Activated CD4-positive, alpha-beta memory T cell treated with anti-CD3 and anti-CD28 coated beads for 36 hours (primary cell): ENCODE measurements at regions of chr2 and their contacts with region 1.

Region 1: DNA sequence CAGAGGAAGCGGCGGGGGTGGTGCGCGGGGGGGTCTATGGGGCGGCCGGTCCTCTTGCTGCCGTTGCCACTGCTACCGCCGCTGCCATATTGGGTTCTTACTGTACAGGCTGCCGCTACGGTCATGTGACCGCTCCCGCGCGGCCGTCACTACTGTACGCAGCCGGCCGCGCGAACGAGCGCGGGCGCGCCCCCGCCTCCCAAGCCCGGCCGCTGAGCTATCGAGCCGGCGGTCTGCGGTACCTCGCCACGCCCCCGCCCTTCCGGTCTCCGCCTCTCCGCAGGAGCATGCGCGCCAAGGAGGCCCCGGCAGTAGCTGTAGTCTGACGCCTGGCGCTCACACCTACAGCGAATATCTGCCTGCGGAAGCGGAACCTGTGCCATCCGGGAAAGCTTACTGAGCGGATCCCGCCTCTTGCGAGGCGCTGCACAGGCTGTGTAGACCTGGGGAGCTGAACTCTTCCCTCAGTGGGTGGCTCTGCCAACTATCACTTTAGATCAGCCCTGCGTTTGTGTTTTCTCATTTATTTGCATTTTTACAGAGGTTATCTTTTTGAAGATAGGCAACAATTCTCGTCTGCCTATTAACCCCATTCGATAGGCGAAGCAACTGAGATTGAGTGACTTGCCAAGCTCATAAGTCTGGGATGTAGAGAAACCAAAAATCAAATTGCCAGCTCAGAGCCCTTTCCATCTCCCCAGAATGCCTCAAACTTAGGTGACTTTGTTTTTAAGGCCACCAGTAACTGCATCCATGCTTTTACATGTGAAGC is at the start of gene ASXL2:
- DNase-seq: peak; percentile 99
- H3K4me3 Mint-ChIP-seq: peak within 1 kb of the TSS; percentile 93
- H3K27ac Mint-ChIP-seq: peak within 1 kb of the TSS; percentile 94
- H3K4me1 Mint-ChIP-seq: peaks cover 39% of the 10 kb centered on the region
- H3K27me3 Mint-ChIP-seq: no peaks in the 10 kb centered on the region
- total RNA-seq, gene ASXL2: 37.8 to 38.7 TPM

Region 2: GRCh38 chr2:25131567-25132298 is 746.8 kb before region 1 on chr2:
- CTCF ChIA-PET with region 1: no interaction called
- POLR2A ChIA-PET with region 1: no interaction called
- intact Hi-C with region 1: no loop called
- DNase-seq: peak; percentile 23
- H3K4me3 Mint-ChIP-seq: peak overlapping the region; percentile 48
- H3K27ac Mint-ChIP-seq: no peak overlapping the region
- H3K4me1 Mint-ChIP-seq: peaks cover 12% of the 10 kb centered on the region
- H3K27me3 Mint-ChIP-seq: peaks cover 50% of the 10 kb centered on the region

Region 3: GRCh38 chr2:25794544-25795276 is 83.8 kb before region 1 on chr2:
- CTCF ChIA-PET with region 1: interaction called, 3 read pairs
- POLR2A ChIA-PET with region 1: interaction called, 3 read pairs
- intact Hi-C with region 1: loop called (anchors 2 kb)
- DNase-seq: no peak
- H3K4me3 Mint-ChIP-seq: peak overlapping the region; percentile 66
- H3K27ac Mint-ChIP-seq: peak overlapping the region; percentile 81
- H3K4me1 Mint-ChIP-seq: peaks cover 77% of the 10 kb centered on the region
- H3K27me3 Mint-ChIP-seq: no peaks in the 10 kb centered on the region

Region 4: DNA sequence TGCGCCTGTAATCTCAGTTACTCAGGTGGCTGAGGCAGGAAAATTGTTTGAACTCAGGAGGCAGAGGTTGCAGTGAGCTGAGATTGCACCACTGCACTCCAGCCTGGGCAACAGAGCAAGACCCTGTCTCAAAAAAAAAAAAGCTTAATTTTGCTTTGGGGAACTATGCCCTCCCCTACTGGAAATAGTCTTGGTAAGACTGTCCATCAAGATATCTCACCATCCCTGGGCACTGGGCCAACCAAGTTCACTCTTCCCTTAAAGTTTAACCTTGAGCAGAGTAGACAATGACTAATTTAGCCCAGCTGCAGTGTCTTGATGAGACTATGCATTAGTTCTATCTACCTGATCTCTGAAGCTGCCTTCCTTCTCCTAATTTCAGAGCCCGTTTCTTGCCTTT is 45.0 kb before region 1 on chr2:
- CTCF ChIA-PET with region 1: no interaction called
- POLR2A ChIA-PET with region 1: no interaction called
- intact Hi-C with region 1: loop called (anchors 1 kb)
- DNase-seq: peak; percentile 39
- H3K4me3 Mint-ChIP-seq: no peak overlapping the region
- H3K27ac Mint-ChIP-seq: no peak overlapping the region
- H3K4me1 Mint-ChIP-seq: peaks cover 54% of the 10 kb centered on the region
- H3K27me3 Mint-ChIP-seq: no peaks in the 10 kb centered on the region

Region 5: DNA sequence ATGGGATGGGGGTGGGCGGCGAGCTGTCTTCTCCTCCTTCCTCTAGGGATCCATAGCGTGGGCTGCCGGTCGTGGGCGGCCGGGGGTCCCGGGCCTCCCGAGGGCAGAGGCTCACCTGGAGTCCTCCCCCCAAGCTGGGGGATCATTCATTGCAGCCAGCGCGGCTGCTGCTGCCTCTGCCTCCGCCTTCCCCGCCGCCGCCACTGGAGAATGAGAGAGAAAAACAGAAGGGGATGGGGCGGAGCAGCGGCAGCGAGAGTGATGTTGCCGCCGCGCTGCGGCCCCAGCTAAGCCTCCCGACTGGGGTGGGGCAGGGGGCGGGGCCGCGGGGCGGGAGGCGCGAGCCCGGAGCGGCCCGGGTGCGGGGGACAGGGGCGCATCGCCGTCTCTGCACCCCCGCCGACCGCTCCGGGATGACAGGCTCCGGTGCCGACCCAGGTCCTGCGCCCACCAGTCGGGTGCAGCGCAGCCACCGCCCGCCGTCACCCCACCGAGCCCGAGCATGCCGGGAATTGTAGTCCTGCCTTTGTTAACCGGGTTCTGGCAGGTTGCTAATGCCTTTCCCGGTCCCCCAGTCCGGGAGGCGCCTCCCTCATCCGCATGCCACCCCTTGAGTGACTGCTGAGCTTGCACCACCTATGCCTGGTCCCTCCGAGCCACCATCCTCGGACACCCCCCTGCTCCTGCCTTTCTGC is 103.9 kb after region 1 on chr2 and contains the start of gene KIF3C:
- CTCF ChIA-PET with region 1: interaction called, 4 read pairs
- POLR2A ChIA-PET with region 1: no interaction called
- intact Hi-C with region 1: loop called (anchors 10 kb)
- DNase-seq: peak; percentile 79
- H3K4me3 Mint-ChIP-seq: peak within 1 kb of the TSS; percentile 80
- H3K27ac Mint-ChIP-seq: no peak within 1 kb of the TSS
- H3K4me1 Mint-ChIP-seq: no peaks in the 10 kb centered on the region
- H3K27me3 Mint-ChIP-seq: no peaks in the 10 kb centered on the region
- total RNA-seq, gene KIF3C: 5.3 to 5.4 TPM

Region 6: GRCh38 chr2:26068602-26069298 is 190.2 kb after region 1 on chr2:
- CTCF ChIA-PET with region 1: no interaction called
- POLR2A ChIA-PET with region 1: no interaction called
- intact Hi-C with region 1: loop called (anchors 2 kb)
- DNase-seq: peak; percentile 76
- H3K4me3 Mint-ChIP-seq: peak overlapping the region; percentile 69
- H3K27ac Mint-ChIP-seq: peak overlapping the region; percentile 96
- H3K4me1 Mint-ChIP-seq: peaks cover 57% of the 10 kb centered on the region
- H3K27me3 Mint-ChIP-seq: no peaks in the 10 kb centered on the region